PC-9 (cell line): ENCODE measurements at regions of chr11 and their contacts with region 1.

Region 1: GRCh38 chr11:130894322-130895025 is 21.8 kb downstream of the SNX19 start:
- DNase-seq: peak; percentile 58 to 59
- H3K4me3 ChIP-seq: no peak overlapping the region
- H3K27ac ChIP-seq: no peak overlapping the region
- H3K4me1 ChIP-seq: no peaks in the 10 kb centered on the region
- H3K27me3 ChIP-seq: no peaks in the 10 kb centered on the region
- CTCF ChIP-seq: peak; percentile 92

Region 2: GRCh38 chr11:130644187-130644586 is 250.3 kb before region 1 on chr11:
- CTCF ChIA-PET with region 1: no interaction called
- POLR2A ChIA-PET with region 1: no interaction called
- intact Hi-C with region 1: no loop called
- DNase-seq: no peak
- H3K4me3 ChIP-seq: no peak overlapping the region
- H3K27ac ChIP-seq: no peak overlapping the region
- H3K4me1 ChIP-seq: peaks cover 4% of the 10 kb centered on the region; the same call in 1 of the 2 replicates
- H3K27me3 ChIP-seq: no peaks in the 10 kb centered on the region
- CTCF ChIP-seq: no peak

Region 3: DNA sequence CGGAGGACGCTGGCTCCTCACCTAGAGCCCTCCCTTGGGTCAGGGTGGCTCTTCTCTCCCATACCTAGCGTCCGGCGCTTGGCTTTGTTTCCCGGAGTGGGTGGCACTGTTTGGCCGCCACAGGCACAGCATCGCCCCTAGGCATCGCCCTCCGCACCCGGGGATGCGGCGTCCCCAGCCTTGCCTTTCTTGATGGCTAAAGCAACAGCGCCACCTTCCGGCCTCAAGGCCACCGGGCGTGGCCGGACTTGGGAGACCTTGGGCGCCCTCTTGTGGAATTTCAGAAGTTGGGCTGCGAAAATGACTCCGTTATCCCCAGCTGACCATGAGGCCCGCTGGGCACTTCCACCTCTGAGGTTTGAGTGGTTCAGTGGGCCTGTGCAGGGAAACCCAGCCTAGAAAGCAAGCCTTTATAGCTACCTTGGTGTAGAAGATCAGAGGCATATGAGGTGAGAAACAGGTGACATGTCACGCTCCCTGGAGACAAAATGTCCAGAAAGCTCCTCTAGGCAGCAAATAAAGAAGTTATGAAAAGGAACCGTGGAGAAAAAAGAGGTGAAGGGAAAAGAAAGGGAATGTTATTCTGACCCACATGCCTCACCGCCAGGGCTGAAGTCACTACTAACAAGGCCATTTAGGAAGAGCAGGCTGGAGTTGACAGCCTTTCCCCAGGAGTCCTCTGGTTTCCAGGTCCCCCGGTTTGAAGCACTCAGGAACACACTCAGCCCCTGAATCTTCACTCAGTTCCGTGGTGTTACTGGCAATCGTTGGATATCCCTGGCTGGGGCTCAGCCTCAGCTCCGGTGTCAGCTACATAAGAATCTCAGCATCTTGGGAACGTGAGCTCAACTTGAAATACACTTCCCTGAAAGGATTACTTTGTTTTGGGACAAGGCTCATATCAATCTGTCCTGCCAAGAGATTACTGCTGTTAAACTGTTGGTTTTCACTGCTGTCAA is 32.3 kb before region 1 on chr11:
- CTCF ChIA-PET with region 1: no interaction called
- POLR2A ChIA-PET with region 1: no interaction called
- intact Hi-C with region 1: loop called (anchors 1 kb)
- DNase-seq: peak; percentile 74 to 79
- H3K4me3 ChIP-seq: no peak overlapping the region
- H3K27ac ChIP-seq: no peak overlapping the region
- H3K4me1 ChIP-seq: no peaks in the 10 kb centered on the region
- H3K27me3 ChIP-seq: no peaks in the 10 kb centered on the region
- CTCF ChIP-seq: peak; percentile 100